Activated T-helper 1 cell treated with anti-CD3 and anti-CD28 coated beads, Interleukin-12 subunit alpha, Interleukin-12 subunit beta, Interleukin-2, Interleukin-4 antibody, amounts not matched to agents 30 ng/mL and 10 ng/mL and 1 ng/mL, durations not matched to agents 14 hours and 24 hours and 36 hours (primary cell): ENCODE measurements at regions of chr2 and their contacts with region 1.

Region 1: GRCh38 chr2:102301867-102302362 is 9.4 kb upstream of the IL1RL1 start:
- DNase-seq: peak; percentile 47
- H3K4me3 Mint-ChIP-seq: peak overlapping the region; percentile 43
- H3K27ac Mint-ChIP-seq: peak overlapping the region; percentile 87
- H3K4me1 Mint-ChIP-seq: peaks cover 67% of the 10 kb centered on the region
- H3K27me3 Mint-ChIP-seq: peaks cover 2% of the 10 kb centered on the region

Region 2: GRCh38 chr2:101998896-101999789 is 302.8 kb before region 1 on chr2:
- intact Hi-C with region 1: loop called (anchors 1 kb)
- DNase-seq: no peak
- H3K4me3 Mint-ChIP-seq: no peak overlapping the region
- H3K27ac Mint-ChIP-seq: peak overlapping the region; percentile 76
- H3K4me1 Mint-ChIP-seq: peaks cover 27% of the 10 kb centered on the region
- H3K27me3 Mint-ChIP-seq: peaks cover 4% of the 10 kb centered on the region

Region 3: GRCh38 chr2:102258386-102259074 is 43.4 kb before region 1 on chr2:
- intact Hi-C with region 1: loop called (anchors 1 kb)
- DNase-seq: peak; percentile 36
- H3K4me3 Mint-ChIP-seq: peak overlapping the region; percentile 81
- H3K27ac Mint-ChIP-seq: peak overlapping the region; percentile 100
- H3K4me1 Mint-ChIP-seq: peaks cover 52% of the 10 kb centered on the region
- H3K27me3 Mint-ChIP-seq: no peaks in the 10 kb centered on the region

Region 4: GRCh38 chr2:102291318-102292251 is 10.3 kb before region 1 on chr2:
- intact Hi-C with region 1: loop called (anchors 1 kb)
- DNase-seq: no peak
- H3K4me3 Mint-ChIP-seq: peak overlapping the region; percentile 15
- H3K27ac Mint-ChIP-seq: peak overlapping the region; percentile 20
- H3K4me1 Mint-ChIP-seq: peaks cover 55% of the 10 kb centered on the region
- H3K27me3 Mint-ChIP-seq: no peaks in the 10 kb centered on the region

Region 5: DNA sequence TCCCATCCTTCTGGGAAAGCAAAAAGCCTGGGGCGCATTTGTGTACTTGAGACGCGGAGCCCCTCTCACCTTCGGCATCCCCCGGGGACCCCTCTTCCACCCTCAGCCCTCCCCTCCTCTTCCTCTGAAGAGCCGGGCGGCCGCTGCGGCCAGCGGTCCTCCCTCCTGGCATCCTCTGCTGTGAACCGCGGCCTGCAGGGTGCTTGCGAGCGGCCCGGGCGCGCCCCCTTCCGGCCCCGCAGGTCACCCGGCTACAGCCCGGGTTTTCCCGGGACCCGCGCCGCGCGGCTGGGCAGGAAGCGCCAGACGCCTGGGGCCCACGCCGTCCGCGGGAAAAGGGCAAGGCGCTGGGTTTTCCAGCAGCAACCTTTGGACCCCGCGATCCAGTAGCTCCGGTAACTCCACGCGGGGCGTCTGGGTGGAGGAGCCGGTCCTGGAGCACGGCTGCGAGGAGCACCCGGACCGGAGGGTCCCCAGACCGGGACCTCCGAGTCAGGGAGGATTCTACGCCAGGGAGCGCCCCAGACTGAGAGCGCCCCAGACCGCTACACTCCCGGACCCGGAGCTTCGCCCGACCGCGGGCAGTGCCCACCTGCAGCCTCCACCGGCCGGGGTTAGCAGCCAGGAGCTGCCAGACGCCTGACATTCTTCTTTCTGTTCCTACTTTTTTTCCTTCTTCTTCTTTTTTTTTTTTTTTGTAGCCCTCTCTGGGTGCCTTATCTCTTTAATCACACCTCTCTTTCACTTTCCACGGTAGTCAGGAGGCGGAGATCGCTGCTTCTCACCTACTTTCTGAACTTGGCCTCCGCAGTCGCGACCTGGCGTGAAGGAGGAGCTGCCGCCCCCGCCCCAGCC is 53.8 kb after region 1 on chr2 and contains the start of gene IL18R1:
- intact Hi-C with region 1: loop called (anchors 1 kb)
- DNase-seq: peak; percentile 71
- H3K4me3 Mint-ChIP-seq: peak within 1 kb of the TSS; percentile 97
- H3K27ac Mint-ChIP-seq: peak within 1 kb of the TSS; percentile 96
- H3K4me1 Mint-ChIP-seq: peaks cover 47% of the 10 kb centered on the region
- H3K27me3 Mint-ChIP-seq: no peaks in the 10 kb centered on the region
- total RNA-seq, gene IL18R1: 57.8 and 61.3 TPM in 2 replicates

Region 6: GRCh38 chr2:102418421-102418961 is 116.6 kb after region 1 on chr2:
- intact Hi-C with region 1: loop called (anchors 1 kb)
- DNase-seq: peak; percentile 34
- H3K4me3 Mint-ChIP-seq: peak overlapping the region; percentile 90
- H3K27ac Mint-ChIP-seq: peak overlapping the region; percentile 94
- H3K4me1 Mint-ChIP-seq: peaks cover 68% of the 10 kb centered on the region
- H3K27me3 Mint-ChIP-seq: no peaks in the 10 kb centered on the region